Breast epithelium (tissue), 4 donors: ENCODE measurements at regions of chr11 and their contacts with region 1.

Region 1: DNA sequence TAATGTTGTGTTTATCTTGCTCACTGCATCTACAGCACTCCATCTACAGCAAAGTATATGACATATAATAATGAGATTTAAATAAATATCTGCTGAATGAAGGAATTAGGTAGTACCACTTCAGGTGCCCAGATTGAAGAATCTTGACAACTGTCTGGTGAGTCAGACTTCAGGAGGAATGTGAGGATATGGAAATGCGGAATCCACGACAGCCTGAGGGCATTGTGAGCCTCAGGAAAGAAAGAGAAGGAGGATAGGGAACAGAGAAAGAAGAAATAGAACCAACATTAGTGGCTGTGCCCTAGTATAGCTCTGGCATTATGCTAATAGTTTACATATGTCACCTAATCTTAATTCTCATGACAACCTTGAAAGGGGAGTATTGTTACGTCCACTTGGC is 304.4 kb downstream of the AASDHPPT start:
- DNase-seq: no peak
- H3K4me3 ChIP-seq: no peak overlapping the region
- H3K27ac ChIP-seq: no peak overlapping the region
- H3K4me1 ChIP-seq: no peaks in the 10 kb centered on the region
- H3K27me3 ChIP-seq: no peaks in the 10 kb centered on the region
- CTCF ChIP-seq: no peak
- POLR2A ChIP-seq: no peak

Region 2: GRCh38 chr11:106427736-106428135 is 45.8 kb after region 1 on chr11:
- intact Hi-C with region 1: loop called (anchors 2 kb)
- DNase-seq: no peak
- H3K4me3 ChIP-seq: no peak overlapping the region
- H3K27ac ChIP-seq: no peak overlapping the region
- H3K4me1 ChIP-seq: no peaks in the 10 kb centered on the region
- H3K27me3 ChIP-seq: no peaks in the 10 kb centered on the region
- CTCF ChIP-seq: no peak
- POLR2A ChIP-seq: no peak